ENCODE measurements at regions of chr10 and their contacts with region 1.

Region 1: DNA sequence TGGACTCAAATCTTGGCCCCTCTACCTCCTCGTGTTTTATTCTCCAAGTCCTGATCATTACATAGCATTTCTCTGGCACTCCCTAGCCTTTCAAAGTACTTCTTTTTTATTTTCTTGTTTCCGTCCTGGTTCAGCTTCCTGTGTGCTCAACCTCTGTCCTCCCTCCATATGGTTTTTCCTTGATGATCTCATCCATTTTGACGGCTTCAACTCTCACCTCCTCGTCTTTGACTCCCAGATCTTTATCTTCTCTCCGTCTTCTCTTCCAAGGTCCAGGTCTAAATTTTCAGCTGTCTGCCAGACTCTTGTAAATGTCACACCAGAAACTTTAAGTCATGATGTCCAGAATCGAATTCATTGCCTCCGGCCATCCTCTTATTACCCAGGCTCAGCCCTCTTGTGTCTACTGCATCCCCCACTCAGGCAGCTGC is 23.3 kb upstream of the GFRA1 start:
- DNase-seq: no peak
- ATAC-seq: no peak
- H3K4me3 ChIP-seq: no peak overlapping the region
- H3K27ac ChIP-seq: no peak overlapping the region
- H3K4me1 ChIP-seq: no peaks in the 10 kb centered on the region
- H3K27me3 ChIP-seq: peaks cover 0 to 5% (median 0%) of the 10 kb centered on the region in 9 donors
- CTCF ChIP-seq: no peak
- POLR2A ChIP-seq: no peak

Region 2: GRCh38 chr10:115706026-115706781 is 590.1 kb before region 1 on chr10:
- intact Hi-C with region 1: loop called in 2 of 10 experiments (anchors 10 kb)
- DNase-seq: no peak
- ATAC-seq: no peak
- H3K4me3 ChIP-seq: no peak overlapping the region
- H3K27ac ChIP-seq: no peak overlapping the region
- H3K4me1 ChIP-seq: no peaks in the 10 kb centered on the region
- H3K27me3 ChIP-seq: no peaks in the 10 kb centered on the region
- CTCF ChIP-seq: peak; percentile 14 to 53 (median 34)
- POLR2A ChIP-seq: no peak

Region 3: GRCh38 chr10:115790220-115790619 is 506.1 kb before region 1 on chr10:
- intact Hi-C with region 1: loop called in 1 of 10 experiments (anchors 10 kb)
- DNase-seq: no peak
- ATAC-seq: no peak
- H3K4me3 ChIP-seq: no peak overlapping the region
- H3K27ac ChIP-seq: no peak overlapping the region
- H3K4me1 ChIP-seq: no peaks in the 10 kb centered on the region
- H3K27me3 ChIP-seq: peaks cover 0 to 3% (median 0%) of the 10 kb centered on the region in 9 donors
- CTCF ChIP-seq: no peak
- POLR2A ChIP-seq: no peak

Measured in heart left ventricle (tissue), 16 donors.